Activated CD4-positive, alpha-beta T cell treated with anti-CD3 and anti-CD28 coated beads for 36 hours (primary cell): ENCODE measurements at regions of chr1 and their contacts with region 1.

Region 1: GRCh38 chr1:207097871-207098324 is 6.1 kb upstream of the C4BPA start:
- DNase-seq: peak; percentile 69
- ATAC-seq: peak; percentile 99
- H3K4me3 Mint-ChIP-seq: no peak overlapping the region
- H3K27ac Mint-ChIP-seq: peak overlapping the region; percentile 79
- H3K4me1 Mint-ChIP-seq: peaks cover 14% of the 10 kb centered on the region
- H3K27me3 Mint-ChIP-seq: peaks cover 13% of the 10 kb centered on the region

Region 2: DNA sequence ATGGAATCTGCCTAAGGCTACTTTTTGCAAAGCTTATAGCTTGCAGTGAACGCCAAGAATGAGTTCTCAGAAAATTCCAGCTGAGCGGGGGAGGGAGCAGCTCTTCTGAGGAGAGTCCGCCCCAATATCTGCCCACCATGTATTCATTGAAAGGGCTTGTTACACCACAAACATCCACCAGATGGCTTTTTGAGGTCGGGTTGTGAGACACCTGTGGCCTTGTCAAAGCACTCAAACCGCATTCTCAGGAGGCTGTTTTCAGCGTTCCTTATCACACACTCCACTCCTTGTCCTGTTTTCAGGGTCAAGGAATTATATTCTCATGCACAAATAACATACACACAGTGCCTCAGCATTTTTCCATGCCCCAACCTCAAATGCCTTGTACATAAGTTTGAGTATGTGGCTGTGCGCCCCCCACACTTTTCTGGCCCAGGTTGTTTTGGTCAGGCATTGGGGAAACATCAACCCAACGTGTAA is 13.2 kb before region 1 on chr1:
- CTCF ChIA-PET with region 1: interaction called, 18 read pairs
- POLR2A ChIA-PET with region 1: no interaction called
- intact Hi-C with region 1: no loop called
- DNase-seq: peak; percentile 70
- ATAC-seq: peak; percentile 77
- H3K4me3 Mint-ChIP-seq: no peak overlapping the region
- H3K27ac Mint-ChIP-seq: no peak overlapping the region
- H3K4me1 Mint-ChIP-seq: peaks cover 20% of the 10 kb centered on the region
- H3K27me3 Mint-ChIP-seq: peaks cover 7% of the 10 kb centered on the region

Region 3: DNA sequence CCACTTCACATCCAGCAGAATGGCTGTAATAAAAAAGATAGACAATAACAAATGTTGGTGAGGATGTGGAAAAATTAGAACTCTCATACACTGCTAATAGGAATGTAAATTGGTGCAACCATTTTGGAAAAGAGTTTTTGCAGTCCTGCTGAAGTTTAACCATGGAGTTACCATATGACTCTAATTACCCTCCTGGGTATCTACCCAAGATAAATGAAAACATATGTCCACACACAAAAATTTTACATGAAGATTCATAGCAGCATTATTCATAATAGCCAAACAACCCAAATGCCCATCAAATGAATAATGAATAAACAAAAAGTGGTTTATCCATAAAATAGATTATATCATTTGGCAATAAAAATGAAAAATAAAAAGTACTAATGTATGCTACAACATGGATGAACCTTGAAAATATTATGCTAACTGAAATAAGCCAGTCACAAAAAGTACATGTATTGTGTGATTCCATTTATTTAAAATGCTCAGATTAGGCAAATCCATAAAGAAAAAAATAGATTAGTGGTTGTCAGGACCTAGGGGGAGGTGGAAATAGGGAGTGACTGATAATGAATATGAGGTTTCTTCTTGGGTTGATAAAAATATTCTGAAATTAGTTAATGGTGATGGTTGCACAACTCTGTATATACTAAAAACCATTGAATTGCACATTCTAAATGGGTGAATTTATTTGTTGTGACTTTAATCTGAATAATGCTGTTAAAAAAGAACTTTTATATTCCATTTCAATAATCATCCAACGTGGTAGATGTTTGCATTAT is 32.5 kb after region 1 on chr1:
- CTCF ChIA-PET with region 1: no interaction called
- POLR2A ChIA-PET with region 1: no interaction called
- intact Hi-C with region 1: no loop called
- DNase-seq: no peak
- ATAC-seq: no peak
- H3K4me3 Mint-ChIP-seq: no peak overlapping the region
- H3K27ac Mint-ChIP-seq: no peak overlapping the region
- H3K4me1 Mint-ChIP-seq: no peaks in the 10 kb centered on the region
- H3K27me3 Mint-ChIP-seq: peaks cover 2% of the 10 kb centered on the region

Region 4: DNA sequence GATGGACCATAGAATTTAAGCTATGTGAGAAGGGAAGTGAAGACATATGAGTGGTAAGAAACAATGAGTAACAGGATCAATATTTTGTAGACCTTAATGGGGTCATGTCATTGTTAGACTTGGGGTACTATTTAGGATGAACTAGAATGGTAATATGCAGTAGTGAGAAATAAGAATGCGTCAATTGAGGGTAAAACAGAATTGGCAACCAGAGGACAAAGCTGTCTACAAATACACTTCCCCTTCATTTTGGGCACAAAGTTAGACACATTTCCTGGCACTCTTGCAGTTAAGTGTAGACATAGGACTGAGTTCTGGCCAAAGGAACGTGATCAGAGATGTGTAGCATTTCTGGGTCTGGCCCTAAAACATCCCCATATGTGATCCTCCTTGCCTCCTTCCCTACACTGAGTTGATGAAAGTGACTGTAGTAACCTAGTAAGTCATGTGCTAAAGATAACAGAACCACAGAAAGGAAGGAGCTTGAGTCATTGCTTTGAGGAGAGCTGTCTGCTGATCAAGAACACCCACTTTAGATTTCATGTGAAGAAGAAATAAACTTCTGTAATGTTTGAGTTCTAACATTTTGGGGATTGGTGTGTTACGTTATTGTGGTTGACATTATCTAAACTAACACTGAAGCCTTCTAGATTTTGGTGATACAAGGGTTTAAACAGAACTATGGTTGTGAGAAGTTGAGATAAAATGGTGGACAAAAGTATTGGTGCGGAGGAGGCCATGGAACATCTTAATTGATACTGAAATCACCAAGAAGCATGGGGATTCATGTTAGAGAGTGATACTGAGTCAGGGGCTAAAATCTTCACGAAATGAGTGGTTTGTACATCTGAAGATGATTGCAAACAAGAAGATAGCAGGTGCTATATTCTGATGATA is 265.3 kb after region 1 on chr1:
- CTCF ChIA-PET with region 1: no interaction called
- POLR2A ChIA-PET with region 1: no interaction called
- intact Hi-C with region 1: loop called in 1 of 2 experiments (anchors 1 kb)
- DNase-seq: peak; percentile 37
- ATAC-seq: peak; percentile 89
- H3K4me3 Mint-ChIP-seq: no peak overlapping the region
- H3K27ac Mint-ChIP-seq: no peak overlapping the region
- H3K4me1 Mint-ChIP-seq: peaks cover 2% of the 10 kb centered on the region
- H3K27me3 Mint-ChIP-seq: no peaks in the 10 kb centered on the region

Region 5: DNA sequence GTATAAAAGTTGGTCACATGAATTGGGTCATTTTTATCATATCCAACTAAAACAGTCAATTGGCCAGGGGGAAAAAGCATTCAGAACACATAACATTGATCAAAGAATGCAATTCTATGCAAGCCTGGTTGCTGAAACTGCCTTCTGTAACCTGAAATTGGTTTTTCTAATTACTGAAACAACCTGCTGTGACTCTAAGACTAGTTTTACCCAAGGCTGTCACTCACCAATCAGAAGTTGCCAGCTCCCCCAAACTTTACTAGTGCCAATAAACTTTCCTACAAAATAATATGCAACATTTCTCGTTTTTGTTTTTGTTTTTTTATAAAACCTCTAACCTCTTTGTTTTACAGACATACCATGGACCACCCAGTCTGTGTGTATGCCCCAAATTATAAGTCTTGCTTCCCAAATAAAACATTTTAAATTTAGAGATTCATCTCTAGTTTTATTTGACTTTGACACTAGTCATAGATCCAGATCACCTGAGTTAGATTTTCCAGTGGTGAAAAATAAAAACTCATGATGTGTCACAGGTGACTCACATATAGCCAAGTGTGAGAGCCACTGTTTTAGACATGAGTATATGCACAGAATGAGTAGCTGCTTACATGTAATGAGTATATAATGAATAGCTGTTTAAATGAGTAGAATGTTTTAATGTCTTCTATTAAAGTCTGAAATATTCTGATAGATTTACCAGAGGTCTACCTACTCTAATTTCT is 292.0 kb after region 1 on chr1:
- CTCF ChIA-PET with region 1: no interaction called
- POLR2A ChIA-PET with region 1: interaction called, 3 read pairs
- intact Hi-C with region 1: loop called (anchors 1 kb)
- DNase-seq: peak; percentile 29
- ATAC-seq: peak; percentile 98
- H3K4me3 Mint-ChIP-seq: no peak overlapping the region
- H3K27ac Mint-ChIP-seq: peak overlapping the region; percentile 83
- H3K4me1 Mint-ChIP-seq: peaks cover 19% of the 10 kb centered on the region
- H3K27me3 Mint-ChIP-seq: no peaks in the 10 kb centered on the region

Region 6: DNA sequence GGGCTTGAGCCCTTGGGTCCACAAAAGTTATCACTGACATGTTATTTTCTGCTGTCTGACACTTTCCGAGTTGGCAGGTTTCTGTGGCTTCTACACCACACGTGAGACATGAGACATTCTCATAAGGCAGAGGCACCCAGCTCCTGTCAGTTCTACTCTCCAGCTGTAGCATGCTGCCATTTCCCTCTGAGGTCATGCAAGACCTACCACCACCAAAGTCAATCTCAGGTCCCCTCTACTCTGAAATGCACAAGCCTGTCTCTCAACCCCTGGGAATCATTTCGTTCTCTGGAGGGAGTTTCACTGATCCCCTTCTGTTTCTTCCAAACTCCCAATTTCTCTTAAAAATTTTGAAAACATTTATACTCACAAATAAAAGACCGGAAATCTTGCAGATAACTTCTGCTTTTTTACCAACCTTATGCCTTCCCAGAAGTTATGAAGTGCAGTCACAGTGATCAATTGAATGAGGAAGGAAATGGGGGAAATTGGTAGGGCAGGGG is 316.8 kb after region 1 on chr1:
- CTCF ChIA-PET with region 1: no interaction called
- POLR2A ChIA-PET with region 1: no interaction called
- intact Hi-C with region 1: loop called in 1 of 2 experiments (anchors 5 kb)
- DNase-seq: peak; percentile 75
- ATAC-seq: peak; percentile 74
- H3K4me3 Mint-ChIP-seq: no peak overlapping the region
- H3K27ac Mint-ChIP-seq: peak overlapping the region; percentile 10
- H3K4me1 Mint-ChIP-seq: peaks cover 37% of the 10 kb centered on the region
- H3K27me3 Mint-ChIP-seq: peaks cover 4% of the 10 kb centered on the region